Caco-2 (cell line): ENCODE measurements at regions of chr12 and their contacts with region 1.

Region 1: GRCh38 chr12:13255792-13256691 is 59.5 kb downstream of the EMP1 start:
- DNase-seq: peak; percentile 96 to 99
- H3K4me3 ChIP-seq: peak overlapping the region; percentile 37
- H3K4me3 Mint-ChIP-seq: peak overlapping the region; percentile 88
- H3K27ac Mint-ChIP-seq: peak overlapping the region; percentile 90
- H3K4me1 ChIP-seq: peaks cover 23% of the 10 kb centered on the region
- H3K4me1 Mint-ChIP-seq: peaks cover 24% of the 10 kb centered on the region
- H3K27me3 ChIP-seq: no peaks in the 10 kb centered on the region
- H3K27me3 Mint-ChIP-seq: no peaks in the 10 kb centered on the region
- CTCF ChIP-seq: peak; percentile 98 to 100

Region 2: GRCh38 chr12:13104409-13104808 is 151.6 kb before region 1 on chr12:
- CTCF ChIA-PET with region 1: no interaction called
- POLR2A ChIA-PET with region 1: no interaction called
- intact Hi-C with region 1: no loop called
- DNase-seq: no peak
- H3K4me3 ChIP-seq: no peak overlapping the region
- H3K4me3 Mint-ChIP-seq: no peak overlapping the region
- H3K27ac Mint-ChIP-seq: no peak overlapping the region
- H3K4me1 ChIP-seq: peaks cover 26% of the 10 kb centered on the region
- H3K4me1 Mint-ChIP-seq: peaks cover 26% of the 10 kb centered on the region
- H3K27me3 ChIP-seq: no peaks in the 10 kb centered on the region
- H3K27me3 Mint-ChIP-seq: no peaks in the 10 kb centered on the region
- CTCF ChIP-seq: no peak

Region 3: DNA sequence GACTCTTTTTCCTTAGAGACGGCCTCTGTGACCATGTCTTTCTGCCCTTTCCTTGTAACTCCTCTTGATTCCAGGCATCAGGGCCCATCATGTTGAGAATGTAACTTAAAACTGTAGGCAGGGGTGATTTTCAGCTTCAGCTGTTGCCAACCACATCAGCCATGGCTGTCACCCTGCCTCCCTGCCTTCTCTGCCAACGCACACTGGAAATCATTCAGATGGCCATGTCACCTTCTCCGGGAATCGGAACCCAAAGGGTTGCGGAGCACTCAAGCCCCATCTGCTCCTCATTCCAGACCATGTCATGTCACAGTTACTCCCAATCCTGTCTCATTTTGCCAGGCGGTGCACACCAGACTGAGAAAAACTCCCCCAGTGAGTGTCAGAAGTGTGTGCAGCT is 12.5 kb after region 1 on chr12:
- CTCF ChIA-PET with region 1: interaction called, 22 read pairs
- POLR2A ChIA-PET with region 1: no interaction called
- intact Hi-C with region 1: no loop called
- DNase-seq: no peak
- H3K4me3 ChIP-seq: no peak overlapping the region
- H3K4me3 Mint-ChIP-seq: no peak overlapping the region
- H3K27ac Mint-ChIP-seq: no peak overlapping the region
- H3K4me1 ChIP-seq: peaks cover 17% of the 10 kb centered on the region
- H3K4me1 Mint-ChIP-seq: peaks cover 15% of the 10 kb centered on the region
- H3K27me3 ChIP-seq: no peaks in the 10 kb centered on the region
- H3K27me3 Mint-ChIP-seq: no peaks in the 10 kb centered on the region
- CTCF ChIP-seq: no peak

Region 4: GRCh38 chr12:13362260-13362841 is 106.3 kb after region 1 on chr12:
- CTCF ChIA-PET with region 1: interaction called, 22 read pairs
- POLR2A ChIA-PET with region 1: no interaction called
- intact Hi-C with region 1: loop called (anchors 2 kb)
- DNase-seq: peak; percentile 85 to 88
- H3K4me3 ChIP-seq: no peak overlapping the region
- H3K4me3 Mint-ChIP-seq: no peak overlapping the region
- H3K27ac Mint-ChIP-seq: no peak overlapping the region
- H3K4me1 ChIP-seq: no peaks in the 10 kb centered on the region
- H3K4me1 Mint-ChIP-seq: no peaks in the 10 kb centered on the region
- H3K27me3 ChIP-seq: no peaks in the 10 kb centered on the region
- H3K27me3 Mint-ChIP-seq: peaks cover 20% of the 10 kb centered on the region
- CTCF ChIP-seq: peak; percentile 93 to 96

Region 5: GRCh38 chr12:13534645-13535398 is 278.8 kb after region 1 on chr12:
- CTCF ChIA-PET with region 1: interaction called, 29 read pairs
- POLR2A ChIA-PET with region 1: no interaction called
- intact Hi-C with region 1: loop called (anchors 1 kb)
- DNase-seq: peak; percentile 82 to 88
- H3K4me3 ChIP-seq: no peak overlapping the region
- H3K4me3 Mint-ChIP-seq: no peak overlapping the region
- H3K27ac Mint-ChIP-seq: no peak overlapping the region
- H3K4me1 ChIP-seq: no peaks in the 10 kb centered on the region; the same call in 1 of the 2 replicates
- H3K4me1 Mint-ChIP-seq: no peaks in the 10 kb centered on the region
- H3K27me3 ChIP-seq: no peaks in the 10 kb centered on the region
- H3K27me3 Mint-ChIP-seq: peaks cover under 1% of the 10 kb centered on the region
- CTCF ChIP-seq: peak; percentile 96

Region 6: GRCh38 chr12:13941258-13942249 is 685.5 kb after region 1 on chr12:
- CTCF ChIA-PET with region 1: interaction called, 7 read pairs
- POLR2A ChIA-PET with region 1: no interaction called
- intact Hi-C with region 1: loop called (anchors 5 kb)
- DNase-seq: peak; percentile 90
- H3K4me3 ChIP-seq: no peak overlapping the region
- H3K4me3 Mint-ChIP-seq: peak overlapping the region; percentile 23
- H3K27ac Mint-ChIP-seq: peak overlapping the region; percentile 23
- H3K4me1 ChIP-seq: peaks cover 32% of the 10 kb centered on the region
- H3K4me1 Mint-ChIP-seq: peaks cover 24% of the 10 kb centered on the region
- H3K27me3 ChIP-seq: no peaks in the 10 kb centered on the region
- H3K27me3 Mint-ChIP-seq: no peaks in the 10 kb centered on the region
- CTCF ChIP-seq: peak; percentile 65 to 91